ENCODE measurements at regions of chr20 and their contacts with region 1.

Region 1: DNA sequence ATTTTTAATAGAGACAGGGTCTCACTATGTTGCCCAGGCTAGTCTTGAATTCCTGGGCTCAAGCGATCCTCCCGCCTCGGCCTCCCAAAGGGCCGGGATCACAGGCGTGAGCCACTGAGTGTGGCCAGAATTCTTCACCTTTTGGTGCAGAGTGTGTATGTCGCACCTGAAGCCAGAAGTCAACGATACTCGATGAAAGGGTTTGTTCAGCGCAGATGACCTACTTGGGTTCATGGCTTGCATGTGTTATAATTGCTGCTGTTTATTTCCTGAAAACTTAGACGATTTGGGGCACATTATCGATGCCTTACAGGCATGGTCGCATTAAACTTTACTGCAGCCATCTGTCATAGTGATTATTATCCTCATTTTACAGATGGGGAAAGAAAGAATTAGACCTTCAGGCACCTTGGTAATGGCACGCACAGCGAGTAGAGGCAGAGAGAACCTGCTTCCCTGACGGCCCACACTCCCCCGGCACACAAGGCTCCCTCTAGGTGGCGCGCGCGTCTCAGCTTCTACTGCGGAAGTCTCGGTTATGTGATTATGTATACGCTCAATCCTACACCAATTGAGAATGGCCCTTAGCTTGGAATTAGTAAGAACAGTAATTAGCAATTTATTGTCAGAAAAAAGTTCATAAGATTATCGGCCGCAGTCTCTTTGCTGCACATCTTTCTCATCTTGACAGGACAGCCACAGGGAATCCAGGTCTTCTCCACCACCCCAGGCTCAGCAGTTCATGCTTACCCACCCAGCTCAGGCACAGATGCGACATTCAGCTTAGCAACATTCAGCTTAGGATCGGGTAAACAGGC is 212.8 kb upstream of the PROKR2 start:
- DNase-seq: peak; percentile 76
- H3K4me3 ChIP-seq: no peak overlapping the region
- H3K27ac ChIP-seq: no peak overlapping the region
- H3K4me1 ChIP-seq: no peaks in the 10 kb centered on the region
- H3K27me3 ChIP-seq: no peaks in the 10 kb centered on the region
- CTCF ChIP-seq: peak; percentile 46 to 76 (median 56)
- POLR2A ChIP-seq: no peak

Region 2: GRCh38 chr20:5504061-5504739 is 25.3 kb before region 1 on chr20:
- intact Hi-C with region 1: no loop called
- DNase-seq: no peak
- H3K4me3 ChIP-seq: peak overlapping the region; percentile 31 to 32
- H3K27ac ChIP-seq: no peak overlapping the region
- H3K4me1 ChIP-seq: no peaks in the 10 kb centered on the region
- H3K27me3 ChIP-seq: no peaks in the 10 kb centered on the region
- CTCF ChIP-seq: peak in 1 of 4 experiments; percentile 12
- POLR2A ChIP-seq: no peak

Region 3: GRCh38 chr20:6075428-6076219 is 546.1 kb after region 1 on chr20:
- intact Hi-C with region 1: loop called (anchors 2 kb)
- DNase-seq: no peak
- H3K4me3 ChIP-seq: no peak overlapping the region
- H3K27ac ChIP-seq: no peak overlapping the region
- H3K4me1 ChIP-seq: no peaks in the 10 kb centered on the region
- H3K27me3 ChIP-seq: no peaks in the 10 kb centered on the region
- CTCF ChIP-seq: no peak
- POLR2A ChIP-seq: no peak